PC-3 (cell line): ENCODE measurements at regions of chr1 and their contacts with region 1.

Region 1: DNA sequence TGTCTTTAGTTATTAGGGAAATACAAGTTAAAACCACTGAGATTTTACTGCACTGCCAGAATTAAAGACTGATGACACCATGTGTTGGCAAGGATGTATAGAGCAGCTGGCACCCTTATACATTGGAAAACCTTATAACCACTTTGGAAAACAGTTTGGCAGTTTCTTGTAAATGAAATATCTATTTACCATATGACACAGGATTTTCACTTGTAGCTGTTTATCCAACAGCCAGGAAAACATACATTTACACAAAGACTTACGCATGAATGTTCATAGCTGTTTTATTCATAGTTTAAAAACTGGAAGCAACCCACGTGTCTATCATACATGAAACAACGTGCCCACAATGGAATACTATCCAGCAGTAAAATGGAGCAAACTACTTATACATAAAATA is 45.3 kb downstream of the PRRC2C start:
- DNase-seq: no peak
- ATAC-seq: peak; percentile 30; the same call in 1 of the 2 replicates
- H3K4me3 ChIP-seq: no peak overlapping the region
- H3K27ac ChIP-seq: no peak overlapping the region
- H3K4me1 ChIP-seq: no peaks in the 10 kb centered on the region
- H3K27me3 ChIP-seq: no peaks in the 10 kb centered on the region
- CTCF ChIP-seq: no peak

Region 2: GRCh38 chr1:171220581-171221054 is 310.1 kb before region 1 on chr1:
- CTCF ChIA-PET with region 1: no interaction called
- POLR2A ChIA-PET with region 1: no interaction called
- intact Hi-C with region 1: no loop called
- DNase-seq: no peak
- ATAC-seq: no peak
- H3K4me3 ChIP-seq: no peak overlapping the region
- H3K27ac ChIP-seq: no peak overlapping the region
- H3K4me1 ChIP-seq: no peaks in the 10 kb centered on the region
- H3K27me3 ChIP-seq: peaks cover 21% of the 10 kb centered on the region; the same call in 1 of the 2 replicates
- CTCF ChIP-seq: no peak

Region 3: GRCh38 chr1:171550050-171550449 is 19.4 kb after region 1 on chr1:
- CTCF ChIA-PET with region 1: no interaction called
- POLR2A ChIA-PET with region 1: no interaction called
- intact Hi-C with region 1: loop called (anchors 1 kb)
- DNase-seq: no peak
- ATAC-seq: no peak
- H3K4me3 ChIP-seq: no peak overlapping the region
- H3K27ac ChIP-seq: no peak overlapping the region
- H3K4me1 ChIP-seq: no peaks in the 10 kb centered on the region
- H3K27me3 ChIP-seq: no peaks in the 10 kb centered on the region
- CTCF ChIP-seq: no peak

Region 4: GRCh38 chr1:171566467-171566866 is 35.8 kb after region 1 on chr1:
- CTCF ChIA-PET with region 1: no interaction called
- POLR2A ChIA-PET with region 1: no interaction called
- intact Hi-C with region 1: loop called (anchors 5 kb)
- DNase-seq: peak; percentile 55
- ATAC-seq: peak; percentile 53
- H3K4me3 ChIP-seq: no peak overlapping the region
- H3K27ac ChIP-seq: no peak overlapping the region
- H3K4me1 ChIP-seq: no peaks in the 10 kb centered on the region
- H3K27me3 ChIP-seq: no peaks in the 10 kb centered on the region
- CTCF ChIP-seq: peak; percentile 82

Region 5: DNA sequence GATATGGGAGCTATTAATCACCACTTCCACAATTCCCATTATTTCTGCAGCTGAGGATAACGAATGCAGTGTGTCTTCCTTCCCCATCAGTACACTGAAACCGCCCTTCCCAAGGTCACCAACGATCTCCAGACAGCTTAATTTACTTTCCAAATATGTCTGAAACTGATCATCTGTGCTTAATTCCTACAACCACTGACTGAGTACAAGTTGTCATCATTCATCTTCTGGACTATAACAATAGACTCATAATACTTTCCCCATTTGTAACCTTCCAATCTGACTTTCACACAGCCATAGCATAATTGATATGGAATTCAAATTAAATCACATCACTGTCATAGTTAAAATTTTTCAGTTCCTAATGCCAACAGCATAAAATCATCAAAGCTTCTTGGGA is 328.0 kb after region 1 on chr1:
- CTCF ChIA-PET with region 1: no interaction called
- POLR2A ChIA-PET with region 1: no interaction called
- intact Hi-C with region 1: no loop called
- DNase-seq: no peak
- ATAC-seq: no peak
- H3K4me3 ChIP-seq: no peak overlapping the region
- H3K27ac ChIP-seq: no peak overlapping the region
- H3K4me1 ChIP-seq: no peaks in the 10 kb centered on the region
- H3K27me3 ChIP-seq: peaks cover 73% of the 10 kb centered on the region
- CTCF ChIP-seq: no peak